ACHN (cell line): ENCODE measurements at regions of chr17 and their contacts with region 1.

Region 1: DNA sequence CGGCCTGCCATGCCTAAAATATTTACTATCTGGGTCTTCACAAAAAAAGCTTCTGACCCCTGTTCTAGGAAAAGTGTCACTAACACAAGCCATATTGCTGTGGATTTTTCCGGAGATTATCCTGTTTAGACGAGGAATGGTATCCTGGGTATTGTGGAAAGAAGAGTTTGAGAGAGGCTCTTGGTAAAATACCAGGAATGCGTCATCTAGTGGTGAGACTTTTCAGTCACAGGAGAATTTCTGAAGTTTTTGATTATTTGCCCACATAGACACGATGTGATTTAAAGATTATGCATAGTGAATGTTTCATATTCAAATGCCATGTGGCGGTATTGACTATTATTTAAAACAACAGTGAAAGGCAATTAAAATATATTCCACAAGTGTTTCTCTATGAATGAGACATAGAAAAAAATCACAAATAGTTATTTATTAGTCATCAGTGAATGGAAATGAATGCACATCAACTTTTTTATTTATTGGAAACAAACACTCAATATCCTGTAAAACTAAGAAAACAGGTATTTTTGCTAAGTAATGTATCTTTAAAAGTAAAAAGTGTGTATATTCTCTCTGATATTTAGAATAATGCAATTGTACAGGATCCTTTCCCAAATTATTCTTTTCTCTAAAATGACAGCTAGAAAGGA is 7.8 kb downstream of the KRT28 start:
- DNase-seq: peak; percentile 71

Region 2: DNA sequence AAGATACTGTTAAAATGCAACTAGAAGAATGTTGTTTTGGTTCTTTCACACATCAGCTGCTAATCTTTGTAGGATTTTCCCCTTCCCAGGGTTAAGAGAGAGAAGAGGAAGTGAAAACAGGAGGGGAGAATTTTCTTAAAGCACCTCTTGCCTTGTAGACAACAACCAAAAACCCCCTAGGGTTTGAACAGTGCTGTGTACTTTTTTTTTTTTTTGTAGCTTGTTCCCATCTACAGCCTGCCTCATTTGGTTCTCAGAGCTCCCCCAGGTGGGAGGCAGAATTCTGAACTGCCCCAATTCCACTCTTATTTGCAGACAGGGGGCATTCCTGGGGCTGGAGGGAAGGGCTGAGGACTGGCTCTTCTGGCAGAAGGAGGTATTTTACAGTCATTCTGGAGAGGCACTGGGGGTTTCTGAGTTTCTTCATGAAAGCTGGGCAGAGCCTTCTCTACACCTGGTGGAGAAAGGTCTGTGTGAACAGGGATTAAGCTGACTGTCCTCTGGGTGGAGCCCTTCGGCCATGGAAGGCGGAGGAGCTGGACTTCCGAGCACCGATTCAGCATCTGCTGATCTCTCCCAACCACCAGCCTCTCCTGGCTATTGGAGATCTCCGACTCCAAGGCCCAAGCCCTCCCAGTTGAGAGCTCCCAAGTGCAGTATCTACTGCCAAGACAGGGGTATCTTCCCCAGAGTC is 176.5 kb before region 1 on chr17:
- in situ Hi-C with region 1: loop called (anchors 25 kb)
- DNase-seq: peak; percentile 73